Endothelial cell of umbilical vein (primary cell): ENCODE measurements at regions of chr3 and their contacts with region 1.

Region 1: DNA sequence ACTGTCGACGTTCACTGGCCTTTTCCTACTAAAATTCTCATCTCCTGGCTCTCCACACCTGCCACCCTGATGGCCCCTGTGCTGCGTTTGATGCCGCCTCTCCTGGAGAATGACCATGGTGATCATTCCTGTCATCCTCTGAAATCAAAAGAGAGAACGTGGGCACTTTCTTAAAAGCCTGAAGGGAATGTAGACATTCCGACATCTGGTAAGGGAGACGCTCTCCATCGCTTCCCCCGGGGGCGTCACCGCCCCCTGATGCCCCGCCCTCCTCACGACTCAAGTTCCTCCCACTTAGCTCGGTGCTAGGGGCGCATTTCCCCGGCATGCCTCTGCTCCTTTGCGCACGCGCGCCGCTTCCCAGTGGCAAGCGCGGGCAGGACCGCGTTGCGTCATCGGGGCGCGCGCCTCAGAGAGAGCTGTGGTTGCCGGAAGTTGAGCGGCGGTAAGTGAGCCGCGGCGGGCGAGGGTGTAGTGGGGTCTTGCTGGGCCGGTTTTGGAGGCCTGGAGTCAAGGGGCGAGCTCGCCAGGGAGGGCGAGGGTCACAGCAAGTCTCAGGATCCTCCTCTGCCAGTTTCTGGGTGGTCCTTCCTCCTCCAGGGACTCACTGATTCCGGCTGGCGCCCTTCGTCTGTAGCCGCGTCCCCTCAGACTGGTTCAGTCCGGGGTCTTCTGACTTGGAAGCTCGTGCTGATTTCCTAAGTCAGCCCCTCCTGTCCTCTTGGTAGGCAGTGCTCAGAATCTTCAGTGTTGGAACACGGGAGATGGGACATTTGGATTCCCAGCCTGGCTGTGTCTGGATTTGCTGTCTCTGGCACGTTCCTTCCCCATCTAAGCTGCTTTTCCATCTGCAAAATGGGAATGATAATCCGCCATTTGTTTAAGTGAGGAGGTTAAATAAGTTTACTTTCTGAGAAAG is at the start of gene ATG7:
- DNase-seq: peak; percentile 98
- H3K4me3 ChIP-seq: peak within 1 kb of the TSS; percentile 76 to 89 (median 88)
- H3K27ac ChIP-seq: peak within 1 kb of the TSS; percentile 89
- H3K4me1 ChIP-seq: peaks cover 15% of the 10 kb centered on the region
- H3K27me3 ChIP-seq: no peaks in the 10 kb centered on the region
- CTCF ChIP-seq: no peak
- POLR2A ChIP-seq: peak; percentile 89
- total RNA-seq, gene ATG7: 48.3 and 50.4 TPM in 2 replicates

Region 2: DNA sequence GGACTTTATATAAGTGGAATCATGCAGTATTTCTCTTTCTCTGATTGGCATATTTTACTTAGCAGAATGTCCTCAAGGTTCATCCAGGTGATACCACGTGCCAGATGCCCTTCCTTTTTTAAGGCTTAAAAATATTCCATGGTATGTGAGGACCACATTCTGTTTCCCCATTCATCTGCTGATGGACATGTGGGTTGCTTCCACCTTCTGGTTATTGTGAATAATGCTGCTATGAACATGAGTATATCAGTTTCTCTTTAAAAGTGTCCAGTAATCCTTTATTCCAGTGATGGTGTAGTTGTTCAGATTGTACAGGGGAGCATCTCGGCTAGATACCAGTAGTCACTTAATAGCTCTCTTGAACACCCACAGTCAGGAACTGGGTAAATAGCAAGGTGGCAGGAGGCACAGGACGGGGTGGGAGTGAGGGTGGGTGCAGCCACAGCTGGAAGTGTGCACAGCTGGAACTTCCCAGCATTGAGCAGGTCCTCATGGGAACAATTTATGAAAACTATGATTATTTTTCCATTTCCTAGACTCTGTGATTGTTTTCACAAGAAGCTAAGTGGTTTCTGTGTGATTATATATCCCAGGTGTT is 50.3 kb before region 1 on chr3:
- CTCF ChIA-PET with region 1: no interaction called
- POLR2A ChIA-PET with region 1: interaction called, 5 read pairs
- dilution Hi-C with region 1: no loop called
- intact Hi-C with region 1: loop called (anchors 1 kb)
- DNase-seq: no peak
- H3K4me3 ChIP-seq: no peak overlapping the region
- H3K27ac ChIP-seq: no peak overlapping the region
- H3K4me1 ChIP-seq: peaks cover 40% of the 10 kb centered on the region
- H3K27me3 ChIP-seq: no peaks in the 10 kb centered on the region
- CTCF ChIP-seq: peak; percentile 5 to 11
- POLR2A ChIP-seq: no peak

Region 3: DNA sequence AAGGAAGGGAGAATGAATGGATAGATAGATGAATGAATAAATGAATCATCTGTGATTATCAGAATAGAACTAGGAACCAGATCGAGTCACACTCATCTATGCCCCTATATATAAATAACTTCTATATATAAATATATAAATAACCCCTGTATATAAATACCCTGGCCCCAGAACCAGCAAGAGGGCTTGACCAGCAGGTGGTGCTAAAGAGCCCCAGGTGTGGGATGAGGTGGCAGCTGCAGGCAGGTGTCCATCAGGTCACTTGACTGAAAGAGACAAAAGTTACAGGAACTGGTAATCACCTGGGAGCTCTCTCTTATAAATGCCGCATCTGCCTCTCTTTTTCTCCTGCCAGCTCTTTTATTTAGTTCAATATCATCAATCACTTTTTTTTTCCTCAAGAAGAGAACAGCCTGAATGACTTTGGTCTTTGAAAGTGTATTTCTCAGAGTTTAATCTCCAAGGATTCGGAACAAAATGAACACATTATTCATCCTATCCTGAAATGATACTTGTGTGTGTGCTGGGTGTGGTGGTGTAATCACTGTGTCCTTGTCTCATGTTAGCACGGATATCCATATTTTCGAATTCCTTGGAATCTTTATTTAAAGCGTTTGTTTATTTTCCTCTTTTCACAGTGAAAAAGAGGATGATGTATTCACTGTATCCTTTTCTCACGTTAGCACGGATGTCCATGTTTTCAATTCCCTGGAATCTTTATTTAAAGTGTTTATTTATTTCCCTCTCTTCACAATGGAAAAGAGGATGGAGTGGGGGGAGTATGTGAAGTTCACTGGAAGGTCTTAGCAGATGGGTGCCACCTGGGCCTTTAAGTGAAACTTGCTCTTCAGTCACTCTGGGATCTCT is 35.4 kb before region 1 on chr3:
- CTCF ChIA-PET with region 1: interaction called, 8 read pairs
- POLR2A ChIA-PET with region 1: no interaction called
- dilution Hi-C with region 1: no loop called
- intact Hi-C with region 1: loop called (anchors 1 kb)
- DNase-seq: peak; percentile 61
- H3K4me3 ChIP-seq: no peak overlapping the region
- H3K27ac ChIP-seq: peak overlapping the region; percentile 40
- H3K4me1 ChIP-seq: peaks cover 23% of the 10 kb centered on the region
- H3K27me3 ChIP-seq: no peaks in the 10 kb centered on the region
- CTCF ChIP-seq: peak; percentile 75 to 78
- POLR2A ChIP-seq: no peak

Region 4: DNA sequence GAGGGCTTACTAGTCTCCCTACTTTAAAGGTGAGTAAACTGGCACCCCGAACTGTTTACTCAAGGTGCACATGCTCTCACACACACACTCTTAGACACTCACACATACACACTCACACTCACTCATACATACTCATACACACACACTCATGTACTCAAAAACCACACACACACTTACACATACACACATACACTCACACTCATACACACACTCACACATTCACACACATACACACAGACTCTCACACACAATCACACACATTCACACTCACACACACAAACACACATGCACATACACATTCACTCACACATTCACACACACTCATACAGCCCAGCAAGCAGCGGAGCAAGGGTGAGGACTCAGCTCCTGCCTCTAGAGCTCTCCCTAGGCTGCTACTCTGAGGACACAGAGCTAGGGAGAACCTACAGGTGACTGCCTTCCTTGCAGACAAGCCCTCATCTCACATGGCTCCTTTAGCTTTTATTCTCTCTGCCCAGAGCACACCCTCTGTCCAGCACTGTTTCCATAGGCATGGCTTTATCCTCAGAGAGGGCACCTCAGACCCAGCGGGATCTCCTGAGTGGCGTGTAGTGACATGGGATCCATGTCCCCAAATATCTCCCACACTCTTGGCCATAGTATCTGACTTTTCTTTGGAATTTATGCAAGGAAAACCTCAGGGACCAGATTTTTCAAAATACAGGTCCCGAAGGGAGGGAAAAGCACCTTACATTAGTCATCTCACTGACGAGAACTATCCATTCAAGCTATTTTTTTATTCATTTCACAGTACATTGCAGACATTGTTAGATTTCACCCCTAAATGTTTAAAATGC is 26.2 kb before region 1 on chr3:
- CTCF ChIA-PET with region 1: interaction called, 3 read pairs
- POLR2A ChIA-PET with region 1: no interaction called
- dilution Hi-C with region 1: no loop called
- intact Hi-C with region 1: loop called (anchors 2 kb)
- DNase-seq: no peak
- H3K4me3 ChIP-seq: no peak overlapping the region
- H3K27ac ChIP-seq: no peak overlapping the region
- H3K4me1 ChIP-seq: peaks cover 2% of the 10 kb centered on the region
- H3K27me3 ChIP-seq: no peaks in the 10 kb centered on the region
- CTCF ChIP-seq: no peak
- POLR2A ChIP-seq: no peak